ENCODE measurements at regions of chr20 and their contacts with region 1.

Region 1: DNA sequence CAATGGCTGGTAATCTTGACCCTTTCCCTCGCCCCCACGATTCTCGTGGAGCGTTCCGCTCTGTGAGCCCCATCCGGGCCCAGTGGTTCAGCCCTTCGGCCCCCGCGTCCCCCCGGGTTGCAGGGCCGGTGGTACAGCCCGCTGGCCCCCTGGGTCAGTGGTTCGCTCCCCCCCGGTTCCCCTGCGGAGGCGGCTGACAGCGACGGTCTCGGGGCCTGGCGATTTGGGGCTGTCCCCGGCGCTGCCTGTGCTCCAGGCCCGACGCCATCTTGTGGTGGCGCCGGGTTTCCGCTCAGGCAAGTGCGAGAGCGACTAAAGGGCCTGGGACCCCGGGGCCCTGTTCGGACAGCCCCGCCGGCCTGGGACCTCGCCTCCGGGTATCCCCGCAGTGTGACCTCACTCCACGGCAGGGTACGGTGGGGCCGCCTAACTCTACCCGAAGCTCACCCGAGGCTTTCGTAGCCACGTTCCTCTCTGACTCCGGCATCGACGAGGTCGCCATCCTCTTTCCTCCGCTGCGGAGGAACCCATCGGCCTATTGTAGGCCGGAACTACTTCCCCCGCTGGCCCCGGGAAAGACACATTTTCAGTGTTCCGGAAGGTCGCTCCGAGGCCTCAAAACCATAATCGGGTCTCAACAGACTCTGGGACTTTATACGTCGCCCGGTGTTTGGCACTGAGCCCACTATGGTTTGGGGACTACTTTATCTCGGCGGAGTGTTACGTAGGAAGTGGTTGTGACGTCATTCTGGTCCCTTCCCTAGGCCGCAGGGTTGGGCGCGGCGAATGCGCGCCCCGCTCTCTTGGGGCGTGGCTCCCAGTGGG is at the start of gene ZNF335:
- DNase-seq: peak; percentile 89 to 97 (median 95)
- H3K4me3 ChIP-seq: peak within 1 kb of the TSS; percentile 92
- H3K4me3 Mint-ChIP-seq: peak within 1 kb of the TSS; percentile 77 to 99 (median 95)
- H3K27ac ChIP-seq: peak within 1 kb of the TSS; percentile 100
- H3K27ac Mint-ChIP-seq: peak within 1 kb of the TSS; percentile 99 to 100 (median 100)
- H3K4me1 ChIP-seq: peaks cover 31% of the 10 kb centered on the region
- H3K4me1 Mint-ChIP-seq: peaks cover 22 to 30% (median 24%) of the 10 kb centered on the region in 3 donors
- H3K27me3 ChIP-seq: no peaks in the 10 kb centered on the region
- H3K27me3 Mint-ChIP-seq: peaks cover 0 to 7% of the 10 kb centered on the region in 2 donors
- total RNA-seq, gene ZNF335: 37.5 to 38.3 TPM

Region 2: DNA sequence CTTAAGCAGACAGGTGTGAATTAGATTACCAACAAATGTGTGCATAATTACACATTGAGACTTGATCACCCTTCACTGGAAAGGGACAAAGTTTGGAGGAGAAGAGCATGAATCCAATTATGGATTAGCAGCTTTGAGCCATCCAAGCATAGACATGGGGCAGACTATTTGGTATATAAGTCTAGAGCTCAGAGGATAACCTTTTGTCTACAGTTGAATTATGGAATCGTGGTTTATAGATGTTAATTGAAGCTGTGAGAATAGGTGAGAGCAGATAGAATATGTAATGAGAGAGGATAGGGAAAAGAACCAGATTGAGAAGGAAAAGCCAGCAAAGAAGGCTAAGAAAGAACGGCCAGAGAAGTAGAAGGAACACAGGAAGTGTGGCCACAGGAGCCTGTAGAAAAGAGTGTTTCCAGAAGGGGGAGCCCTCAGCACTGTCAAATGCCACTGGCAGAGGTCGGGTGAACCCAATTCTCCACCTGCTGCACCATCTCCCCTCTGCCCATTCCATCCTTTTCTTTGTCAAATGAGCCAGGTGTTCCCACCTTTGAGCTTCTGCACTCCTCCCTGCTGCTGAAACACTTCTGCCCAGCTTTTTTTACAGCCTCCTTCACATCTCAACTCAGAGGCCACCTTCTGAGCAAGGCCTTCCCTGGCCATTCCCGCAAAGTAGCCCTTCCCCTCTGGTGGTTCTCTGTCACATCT is 172.8 kb before region 1 on chr20:
- CTCF ChIA-PET with region 1: interaction called, 21 read pairs
- POLR2A ChIA-PET with region 1: interaction called, 5 read pairs
- DNase-seq: peak; percentile 40 to 73 (median 49)
- H3K4me3 ChIP-seq: no peak overlapping the region
- H3K4me3 Mint-ChIP-seq: no peak overlapping the region
- H3K27ac ChIP-seq: no peak overlapping the region
- H3K27ac Mint-ChIP-seq: peak overlapping the region; percentile 10 to 94 (median 66)
- H3K4me1 ChIP-seq: no peaks in the 10 kb centered on the region
- H3K4me1 Mint-ChIP-seq: peaks cover 10% of the 10 kb centered on the region in 3 donors
- H3K27me3 ChIP-seq: no peaks in the 10 kb centered on the region
- H3K27me3 Mint-ChIP-seq: no peaks in the 10 kb centered on the region

Region 3: DNA sequence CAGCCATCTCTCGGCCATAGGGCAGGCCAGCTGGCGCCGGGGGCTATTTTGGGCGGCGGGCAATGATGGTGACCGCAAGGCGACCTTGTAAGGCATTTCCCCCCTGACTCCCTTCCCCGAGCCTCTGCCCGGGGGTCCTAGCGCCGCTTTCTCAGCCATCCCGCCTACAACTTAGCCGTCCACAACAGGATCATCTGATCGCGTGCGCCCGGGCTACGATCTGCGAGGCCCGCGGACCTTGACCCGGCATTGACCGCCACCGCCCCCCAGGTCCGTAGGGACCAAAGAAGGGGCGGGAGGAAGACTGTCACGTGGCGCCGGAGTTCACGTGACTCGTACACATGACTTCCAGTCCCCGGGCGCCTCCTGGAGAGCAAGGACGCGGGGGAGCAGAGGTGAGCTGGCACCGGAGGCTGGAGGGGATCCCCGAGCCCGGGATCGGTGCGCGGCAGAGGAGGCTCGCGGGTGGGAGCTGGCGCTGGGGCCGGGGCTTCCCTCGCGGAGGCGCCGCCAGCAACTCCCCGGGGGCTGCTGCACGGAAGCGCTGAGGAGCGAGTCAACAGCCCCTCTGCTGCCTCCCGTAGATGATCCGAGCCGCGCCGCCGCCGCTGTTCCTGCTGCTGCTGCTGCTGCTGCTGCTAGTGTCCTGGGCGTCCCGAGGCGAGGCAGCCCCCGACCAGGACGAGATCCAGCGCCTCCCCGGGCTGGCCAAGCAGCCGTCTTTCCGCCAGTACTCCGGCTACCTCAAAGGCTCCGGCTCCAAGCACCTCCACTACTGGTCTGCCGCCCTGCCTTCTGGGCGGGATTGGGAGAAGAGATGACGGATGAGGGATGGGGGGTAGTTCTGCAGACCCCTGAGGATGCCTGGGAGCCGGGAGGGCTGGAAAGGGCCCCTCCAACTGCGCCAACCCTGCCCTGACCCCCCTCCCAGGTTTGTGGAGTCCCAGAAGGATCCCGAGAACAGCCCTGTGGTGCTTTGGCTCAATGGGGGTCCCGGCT is 80.6 kb before region 1 on chr20 and contains the starts of genes CTSA and NEURL2:
- CTCF ChIA-PET with region 1: interaction called, 12 read pairs
- POLR2A ChIA-PET with region 1: interaction called, 8 read pairs
- DNase-seq: peak; percentile 77 to 90 (median 81)
- H3K4me3 ChIP-seq: peak within 1 kb of the TSS; percentile 85
- H3K4me3 Mint-ChIP-seq: peak within 1 kb of the TSS; percentile 87 to 95 (median 92)
- H3K27ac ChIP-seq: peak within 1 kb of the TSS; percentile 53
- H3K27ac Mint-ChIP-seq: peak within 1 kb of the TSS; percentile 83 to 97 (median 91)
- H3K4me1 ChIP-seq: peaks cover 23% of the 10 kb centered on the region
- H3K4me1 Mint-ChIP-seq: peaks cover 29 to 47% (median 39%) of the 10 kb centered on the region in 3 donors
- H3K27me3 ChIP-seq: no peaks in the 10 kb centered on the region
- H3K27me3 Mint-ChIP-seq: no peaks in the 10 kb centered on the region
- total RNA-seq, gene CTSA: 81.1 to 82.1 TPM
- total RNA-seq, gene NEURL2: 2.7 to 2.8 TPM

Region 4: GRCh38 chr20:45946149-45946970 is 25.5 kb before region 1 on chr20:
- CTCF ChIA-PET with region 1: interaction called, 26 read pairs
- POLR2A ChIA-PET with region 1: interaction called, 14 read pairs
- DNase-seq: peak in 3 of 5 donors; percentile 28 to 73 (median 57)
- H3K4me3 ChIP-seq: no peak overlapping the region
- H3K4me3 Mint-ChIP-seq: peak overlapping the region in 5 of 7 donors; percentile 32 to 70 (median 52)
- H3K27ac ChIP-seq: peak overlapping the region; percentile 3
- H3K27ac Mint-ChIP-seq: peak overlapping the region; percentile 47 to 97 (median 77)
- H3K4me1 ChIP-seq: peaks cover 10% of the 10 kb centered on the region
- H3K4me1 Mint-ChIP-seq: peaks cover 4 to 22% (median 15%) of the 10 kb centered on the region in 3 donors
- H3K27me3 ChIP-seq: no peaks in the 10 kb centered on the region
- H3K27me3 Mint-ChIP-seq: no peaks in the 10 kb centered on the region

Region 5: DNA sequence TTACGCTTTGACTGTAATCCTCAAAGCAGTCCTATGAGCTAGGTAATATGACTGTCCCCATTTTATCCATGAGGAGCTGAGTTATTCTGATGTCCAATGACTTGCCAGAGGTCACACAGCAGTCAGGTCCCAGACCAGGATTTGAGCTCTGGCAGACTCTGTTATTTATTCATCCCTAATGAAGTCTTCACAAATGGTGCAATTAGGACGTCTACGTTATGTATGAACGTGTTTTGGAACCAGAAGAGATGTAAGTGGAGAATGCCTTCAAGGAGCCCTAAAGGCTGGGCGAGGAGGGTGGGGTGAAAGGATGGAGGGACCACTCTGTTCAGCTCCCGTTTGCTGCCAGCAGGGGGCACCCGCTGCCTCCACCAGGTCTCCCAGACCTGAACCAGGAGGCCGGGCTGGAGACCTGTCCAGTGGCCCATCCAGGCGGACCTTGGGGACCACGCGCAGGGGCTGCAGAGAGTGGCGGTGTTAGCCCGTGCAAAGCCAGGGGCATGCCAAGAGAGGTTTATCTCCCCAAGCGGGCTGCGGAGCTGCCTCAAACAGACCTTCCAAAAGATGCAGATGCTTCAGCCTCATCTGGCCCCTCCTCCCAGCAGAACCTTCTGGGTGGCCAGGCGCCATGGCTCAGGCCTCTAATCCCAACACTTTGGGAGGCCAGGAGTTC is 15.4 kb after region 1 on chr20:
- CTCF ChIA-PET with region 1: interaction called, 25 read pairs
- POLR2A ChIA-PET with region 1: interaction called, 3 read pairs
- DNase-seq: peak; percentile 61 to 80 (median 67)
- H3K4me3 ChIP-seq: no peak overlapping the region
- H3K4me3 Mint-ChIP-seq: no peak overlapping the region
- H3K27ac ChIP-seq: no peak overlapping the region
- H3K27ac Mint-ChIP-seq: no peak overlapping the region
- H3K4me1 ChIP-seq: no peaks in the 10 kb centered on the region
- H3K4me1 Mint-ChIP-seq: no peaks in the 10 kb centered on the region
- H3K27me3 ChIP-seq: no peaks in the 10 kb centered on the region
- H3K27me3 Mint-ChIP-seq: peaks cover 14% of the 10 kb centered on the region in 2 donors

Region 6: GRCh38 chr20:46013826-46014516 is 42.1 kb after region 1 on chr20:
- CTCF ChIA-PET with region 1: interaction called, 25 read pairs
- POLR2A ChIA-PET with region 1: interaction called, 3 read pairs
- DNase-seq: peak; percentile 53 to 69 (median 56)
- H3K4me3 ChIP-seq: peak overlapping the region; percentile 54
- H3K4me3 Mint-ChIP-seq: peak overlapping the region; percentile 21 to 70 (median 54)
- H3K27ac ChIP-seq: no peak overlapping the region
- H3K27ac Mint-ChIP-seq: peak overlapping the region in 3 of 8 donors; percentile 9 to 48 (median 47)
- H3K4me1 ChIP-seq: peaks cover 39% of the 10 kb centered on the region
- H3K4me1 Mint-ChIP-seq: peaks cover 38 to 54% (median 39%) of the 10 kb centered on the region in 3 donors
- H3K27me3 ChIP-seq: peaks cover 48% of the 10 kb centered on the region
- H3K27me3 Mint-ChIP-seq: peaks cover 39 to 80% of the 10 kb centered on the region in 2 donors

Region 7: DNA sequence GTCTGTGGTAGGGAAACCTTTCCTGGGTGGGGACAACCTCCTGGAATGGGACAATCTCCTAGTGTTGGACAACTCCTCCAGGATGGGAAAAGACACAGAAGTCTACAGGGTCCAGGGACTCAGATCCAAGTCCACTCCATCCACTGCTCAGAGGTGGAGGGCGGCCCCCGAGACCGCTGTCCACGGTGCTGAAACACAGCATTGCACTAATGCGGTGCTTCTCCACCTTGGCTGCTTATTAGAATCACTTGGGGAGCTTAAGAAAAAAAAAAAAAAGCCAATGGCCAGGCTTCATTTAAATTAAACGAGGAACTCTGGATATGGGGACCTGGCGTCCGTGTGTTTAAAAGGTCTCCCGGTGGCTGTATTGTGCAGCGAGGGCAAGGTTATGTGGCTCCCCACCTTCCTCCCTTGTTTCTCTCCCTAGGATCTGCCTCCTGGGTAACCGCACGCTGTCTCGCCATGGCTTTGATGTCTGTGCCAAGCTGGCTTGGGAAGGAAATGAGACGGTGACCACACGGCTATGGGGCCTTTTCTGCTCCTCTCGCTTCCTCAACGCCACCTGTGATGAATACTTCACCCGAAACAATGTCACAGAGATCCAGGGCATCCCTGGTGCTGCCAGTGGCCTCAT is 69.1 kb after region 1 on chr20:
- CTCF ChIA-PET with region 1: no interaction called
- POLR2A ChIA-PET with region 1: no interaction called
- DNase-seq: peak in 3 of 5 donors; percentile 21 to 57 (median 21)
- H3K4me3 ChIP-seq: no peak overlapping the region
- H3K4me3 Mint-ChIP-seq: no peak overlapping the region
- H3K27ac ChIP-seq: no peak overlapping the region
- H3K27ac Mint-ChIP-seq: no peak overlapping the region
- H3K4me1 ChIP-seq: no peaks in the 10 kb centered on the region
- H3K4me1 Mint-ChIP-seq: no peaks in the 10 kb centered on the region
- H3K27me3 ChIP-seq: peaks cover 2% of the 10 kb centered on the region
- H3K27me3 Mint-ChIP-seq: peaks cover 18 to 53% of the 10 kb centered on the region in 2 donors

Measured in CD8-positive, alpha-beta memory T cell (primary cell).